ENCODE measurements at regions of chr3 and their contacts with region 1.

Region 1: GRCh38 chr3:12751567-12751966 is 7.5 kb downstream of the TMEM40 start:
- DNase-seq: no peak
- H3K4me3 ChIP-seq: no peak overlapping the region
- H3K27me3 ChIP-seq: peaks cover 2% of the 10 kb centered on the region; the same call in 1 of the 2 replicates
- CTCF ChIP-seq: no peak

Region 2: DNA sequence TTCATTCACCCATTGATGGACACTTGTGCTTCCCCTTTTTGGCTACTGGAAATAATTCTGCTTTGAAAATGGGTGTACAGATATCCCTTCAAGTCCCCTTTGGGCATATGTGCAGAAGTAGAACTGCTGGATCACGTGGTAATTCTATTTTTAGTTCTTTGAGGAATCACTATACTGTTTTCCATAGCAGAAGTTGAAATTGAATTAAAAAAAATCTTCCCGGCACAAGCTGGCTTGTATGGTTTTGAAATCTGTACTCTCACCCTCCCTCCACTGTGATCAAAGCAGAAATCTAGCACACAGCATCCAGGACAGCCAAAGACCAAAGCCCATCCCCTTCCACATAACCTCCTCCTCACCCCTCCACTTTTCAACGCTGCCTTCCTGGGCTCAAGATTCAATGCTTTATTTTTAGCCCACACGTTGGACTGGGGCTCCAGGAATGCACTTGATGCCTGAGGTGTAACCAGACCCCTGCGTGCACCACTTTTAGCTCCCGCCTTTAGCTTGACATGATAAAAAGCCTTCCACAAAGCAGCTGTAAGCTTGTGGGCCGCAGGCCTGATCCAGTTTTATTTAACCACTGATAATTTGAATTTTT is 22.4 kb before region 1 on chr3:
- CTCF ChIA-PET with region 1: interaction called, 3 read pairs
- POLR2A ChIA-PET with region 1: interaction called, 17 read pairs
- DNase-seq: no peak
- H3K4me3 ChIP-seq: no peak overlapping the region
- H3K27me3 ChIP-seq: 0 out of 2 replicates have a peak, but pooled peaks cover under 1% of the 10 kb centered on the region
- CTCF ChIP-seq: no peak

Region 3: DNA sequence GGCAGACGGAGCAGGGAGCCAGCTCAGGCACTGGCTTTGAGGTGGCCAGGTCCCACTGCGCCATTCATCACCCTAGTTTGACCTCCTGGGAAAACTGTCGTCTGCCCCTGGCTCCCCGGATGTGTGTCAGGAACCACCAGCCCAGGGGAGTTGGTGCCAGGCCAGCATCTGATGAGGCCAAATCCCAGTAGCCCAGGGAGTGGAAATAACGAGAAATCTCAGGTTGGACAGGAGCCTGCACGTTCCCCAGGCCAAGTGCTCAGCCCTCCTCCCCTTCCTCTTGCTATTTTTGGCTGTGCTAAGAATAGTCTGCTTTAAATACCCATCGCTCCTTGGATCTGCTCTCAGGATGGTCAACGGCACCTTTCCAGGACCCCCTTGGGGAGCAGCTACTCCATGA is 182.9 kb after region 1 on chr3:
- CTCF ChIA-PET with region 1: no interaction called
- POLR2A ChIA-PET with region 1: no interaction called
- DNase-seq: peak; percentile 23
- H3K4me3 ChIP-seq: no peak overlapping the region
- H3K27me3 ChIP-seq: no peaks in the 10 kb centered on the region
- CTCF ChIP-seq: no peak